MCF 10A (cell line): ENCODE measurements at regions of chr20 and their contacts with region 1.

Region 1: DNA sequence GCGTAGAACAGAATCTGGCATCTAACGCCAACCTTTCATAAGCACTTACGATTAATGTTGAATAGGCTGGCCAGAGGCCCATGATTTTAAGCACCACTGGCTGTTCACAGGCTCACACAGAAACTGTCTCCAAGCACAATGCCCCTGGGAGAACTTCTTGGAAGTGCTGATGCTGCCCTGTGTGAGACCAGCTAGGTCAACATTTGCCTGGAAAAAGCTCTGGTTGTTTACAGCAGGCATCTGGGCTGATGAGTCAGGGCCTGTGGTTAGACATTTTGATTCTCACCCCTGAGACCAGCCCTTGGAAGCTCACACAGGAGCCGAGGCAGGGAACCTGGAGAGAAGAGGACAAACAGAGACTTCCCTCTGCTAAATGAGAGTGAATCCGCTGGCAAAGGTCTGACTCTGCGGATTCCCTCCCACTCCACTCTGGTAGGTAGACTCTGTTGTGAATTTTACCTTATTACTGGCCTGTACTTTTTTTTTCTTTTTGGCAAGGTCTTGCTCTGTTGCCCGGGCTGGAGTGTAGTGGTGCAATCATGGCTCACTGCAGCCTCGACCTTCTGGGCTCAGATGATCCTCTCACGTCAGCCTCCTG is 6.8 kb upstream of the SULF2 start:
- DNase-seq: peak; percentile 99
- H3K4me3 Mint-ChIP-seq: peak overlapping the region; percentile 77
- H3K27ac Mint-ChIP-seq: peak overlapping the region; percentile 94
- H3K4me1 Mint-ChIP-seq: peaks cover 50% of the 10 kb centered on the region
- H3K27me3 Mint-ChIP-seq: no peaks in the 10 kb centered on the region
- CTCF ChIP-seq: no peak

Region 2: GRCh38 chr20:45880988-45881788 is 1910.9 kb before region 1 on chr20 and contains the start of gene ZSWIM1:
- CTCF ChIA-PET with region 1: no interaction called
- POLR2A ChIA-PET with region 1: no interaction called
- intact Hi-C with region 1: no loop called
- DNase-seq: peak; percentile 99
- H3K4me3 Mint-ChIP-seq: peak within 1 kb of the TSS; percentile 97
- H3K27ac Mint-ChIP-seq: peak within 1 kb of the TSS; percentile 97
- H3K4me1 Mint-ChIP-seq: peaks cover 21% of the 10 kb centered on the region
- H3K27me3 Mint-ChIP-seq: no peaks in the 10 kb centered on the region
- CTCF ChIP-seq: no peak
- total RNA-seq, gene ZSWIM1: 7.6 and 10.3 TPM in 2 replicates

Region 3: DNA sequence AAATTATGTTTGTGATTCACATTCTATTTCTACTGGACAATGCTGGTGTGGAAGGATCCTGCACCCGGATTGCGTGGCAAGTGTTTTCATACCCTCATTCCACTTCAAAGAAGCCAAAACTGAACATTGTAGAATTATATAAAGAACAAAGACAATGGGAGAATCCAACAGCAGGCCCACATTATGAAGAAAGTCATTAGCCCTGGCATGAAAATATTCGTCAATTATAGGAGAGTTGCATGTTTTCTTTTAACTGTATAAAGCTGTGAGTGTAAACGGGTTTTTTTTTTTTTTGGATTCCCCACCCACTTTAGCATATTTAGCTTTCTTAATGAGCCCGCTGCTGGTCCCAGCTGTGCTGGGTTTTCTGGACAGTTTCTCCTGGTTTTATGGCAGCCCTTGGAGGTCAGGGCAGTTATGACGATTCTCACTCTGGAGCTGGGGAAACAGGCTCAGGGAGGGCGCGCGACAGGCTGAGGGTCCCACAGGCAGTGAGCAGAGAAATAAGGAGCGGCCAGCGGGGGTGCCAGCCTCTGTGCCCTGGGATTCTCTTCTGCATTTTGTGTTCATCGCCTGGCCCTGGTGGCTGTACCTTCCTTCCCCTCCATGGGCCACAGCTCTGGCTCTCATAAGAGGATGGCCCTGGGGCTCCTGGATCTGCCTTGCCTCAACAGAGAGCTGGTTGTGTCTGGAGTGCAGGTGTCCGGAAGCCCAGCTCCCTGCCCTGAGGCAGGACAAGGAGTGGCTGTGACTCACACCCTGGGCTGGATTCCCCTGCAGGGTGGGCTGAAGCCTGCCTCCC is 17.2 kb after region 1 on chr20:
- CTCF ChIA-PET with region 1: interaction called, 13 read pairs
- POLR2A ChIA-PET with region 1: interaction called, 11 read pairs
- intact Hi-C with region 1: loop called (anchors 2 kb)
- DNase-seq: peak; percentile 94
- H3K4me3 Mint-ChIP-seq: peak overlapping the region; percentile 54
- H3K27ac Mint-ChIP-seq: peak overlapping the region; percentile 91
- H3K4me1 Mint-ChIP-seq: peaks cover 33% of the 10 kb centered on the region
- H3K27me3 Mint-ChIP-seq: no peaks in the 10 kb centered on the region
- CTCF ChIP-seq: no peak

Region 4: DNA sequence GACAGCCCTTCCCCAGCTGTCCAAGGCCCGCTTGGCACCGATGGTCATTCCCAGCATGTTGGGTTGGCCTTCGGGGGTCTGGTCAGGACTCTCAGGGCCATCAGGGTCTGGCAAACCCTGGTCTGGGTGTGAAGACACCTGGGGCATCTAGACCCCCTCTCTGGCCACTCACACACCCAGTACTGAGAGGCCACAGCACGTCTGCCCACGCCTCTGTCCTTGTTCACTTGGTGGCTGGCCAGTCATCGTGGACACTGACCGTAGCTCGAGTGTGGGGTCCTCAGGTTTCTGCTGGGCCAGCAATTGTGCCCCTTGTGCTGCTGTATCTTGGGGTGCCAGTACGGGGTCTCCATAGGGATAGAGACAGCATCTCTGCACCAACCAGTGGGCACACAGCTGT is 47.1 kb after region 1 on chr20:
- CTCF ChIA-PET with region 1: interaction called, 9 read pairs
- POLR2A ChIA-PET with region 1: interaction called, 15 read pairs
- intact Hi-C with region 1: loop called (anchors 2 kb)
- DNase-seq: no peak
- H3K4me3 Mint-ChIP-seq: no peak overlapping the region
- H3K27ac Mint-ChIP-seq: no peak overlapping the region
- H3K4me1 Mint-ChIP-seq: peaks cover 32% of the 10 kb centered on the region
- H3K27me3 Mint-ChIP-seq: no peaks in the 10 kb centered on the region
- CTCF ChIP-seq: no peak

Region 5: DNA sequence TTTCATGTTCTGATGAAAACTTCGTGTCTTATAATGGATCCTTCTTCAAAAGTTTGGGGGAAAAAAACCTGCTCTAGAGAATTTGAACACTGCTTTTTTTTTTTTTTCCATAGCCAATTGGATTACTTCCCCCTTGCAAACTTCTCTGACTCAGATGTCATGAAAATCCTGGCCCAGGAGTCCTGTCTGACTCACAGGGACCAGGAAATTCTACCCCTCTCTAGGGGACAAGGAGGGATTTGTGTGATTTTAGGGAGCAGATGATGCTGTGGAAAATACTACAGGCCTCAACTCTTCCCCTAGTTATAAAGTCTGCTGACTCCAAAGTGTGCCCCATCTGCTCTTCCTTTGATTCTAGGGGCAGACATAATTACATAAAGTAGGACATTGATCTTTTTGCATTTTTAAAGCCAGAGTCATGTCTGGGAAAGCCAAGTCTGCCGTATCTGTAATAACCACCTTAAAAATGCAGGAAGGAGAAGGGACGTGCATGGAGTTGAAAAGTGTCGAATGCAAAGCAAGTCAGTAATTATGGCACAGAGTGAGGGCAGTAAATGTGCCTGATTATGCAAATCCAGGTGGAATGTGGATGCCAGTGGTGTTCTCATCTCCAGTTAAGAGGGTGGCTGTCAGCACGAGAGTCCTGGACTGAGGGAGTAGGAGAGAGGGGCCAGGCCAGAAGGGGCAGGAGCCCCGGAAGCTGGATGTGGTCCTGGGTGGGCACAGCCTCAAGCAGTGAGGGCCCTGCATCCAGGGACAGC is 137.4 kb after region 1 on chr20:
- CTCF ChIA-PET with region 1: interaction called, 26 read pairs
- POLR2A ChIA-PET with region 1: interaction called, 72 read pairs
- intact Hi-C with region 1: loop called (anchors 2 kb)
- DNase-seq: peak; percentile 79
- H3K4me3 Mint-ChIP-seq: no peak overlapping the region
- H3K27ac Mint-ChIP-seq: peak overlapping the region; percentile 94
- H3K4me1 Mint-ChIP-seq: peaks cover 52% of the 10 kb centered on the region
- H3K27me3 Mint-ChIP-seq: no peaks in the 10 kb centered on the region
- CTCF ChIP-seq: no peak

Region 6: DNA sequence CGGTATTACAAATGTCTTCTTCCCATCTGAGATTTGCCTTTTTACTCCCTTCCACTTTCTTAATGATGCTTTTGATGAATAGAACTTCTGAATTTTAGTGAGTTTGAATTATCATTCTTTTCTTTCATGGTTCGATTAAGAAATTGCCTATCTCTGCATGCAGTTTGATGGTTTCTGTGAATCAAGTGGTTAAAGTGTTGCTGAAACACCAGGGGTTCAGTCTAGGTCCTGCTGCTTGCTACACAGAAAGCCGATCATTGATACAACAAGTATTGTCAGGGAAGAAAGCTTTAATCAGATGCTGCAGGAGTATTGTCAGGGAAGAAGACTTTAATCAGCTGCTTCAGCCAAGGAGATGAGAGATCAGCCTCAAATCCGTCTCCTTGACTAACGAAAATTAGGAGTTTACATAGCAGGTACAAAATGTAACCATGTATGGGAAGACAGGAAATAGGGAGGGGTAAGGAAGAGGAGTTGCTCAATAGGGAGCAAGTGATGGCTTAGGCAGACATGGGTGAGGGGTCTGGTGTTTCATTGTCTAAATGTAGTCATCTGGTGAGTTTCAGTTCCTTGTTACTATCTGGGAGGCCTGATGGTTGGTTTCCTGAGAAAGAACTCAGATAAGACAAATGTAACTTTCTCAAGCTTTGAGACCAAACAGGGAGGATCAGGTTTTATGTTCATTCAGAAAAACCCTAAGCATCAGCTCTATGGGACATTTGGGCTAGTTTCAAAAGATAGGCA is 210.3 kb after region 1 on chr20:
- CTCF ChIA-PET with region 1: no interaction called
- POLR2A ChIA-PET with region 1: no interaction called
- intact Hi-C with region 1: no loop called
- DNase-seq: no peak
- H3K4me3 Mint-ChIP-seq: no peak overlapping the region
- H3K27ac Mint-ChIP-seq: no peak overlapping the region
- H3K4me1 Mint-ChIP-seq: peaks cover 30% of the 10 kb centered on the region
- H3K27me3 Mint-ChIP-seq: no peaks in the 10 kb centered on the region
- CTCF ChIP-seq: no peak

Region 7: GRCh38 chr20:48283305-48284080 is 491.4 kb after region 1 on chr20:
- CTCF ChIA-PET with region 1: no interaction called
- POLR2A ChIA-PET with region 1: interaction called, 3 read pairs
- intact Hi-C with region 1: loop called (anchors 5 kb)
- DNase-seq: peak; percentile 90
- H3K4me3 Mint-ChIP-seq: no peak overlapping the region
- H3K27ac Mint-ChIP-seq: peak overlapping the region; percentile 20
- H3K4me1 Mint-ChIP-seq: peaks cover 13% of the 10 kb centered on the region
- H3K27me3 Mint-ChIP-seq: no peaks in the 10 kb centered on the region
- CTCF ChIP-seq: no peak